PC-9 (cell line): ENCODE measurements at regions of chr4 and their contacts with region 1.

Region 1: GRCh38 chr4:41214136-41214824 is at the start of gene APBB2:
- DNase-seq: peak; percentile 89 to 95
- H3K4me3 ChIP-seq: peak within 1 kb of the TSS; percentile 86
- H3K27ac ChIP-seq: peak within 1 kb of the TSS; percentile 38; the same call in 1 of the 2 replicates
- H3K4me1 ChIP-seq: peaks cover 30% of the 10 kb centered on the region
- H3K27me3 ChIP-seq: no peaks in the 10 kb centered on the region
- CTCF ChIP-seq: peak; percentile 77
- total RNA-seq, gene APBB2: 33.6 and 46.0 TPM in 2 replicates

Region 2: DNA sequence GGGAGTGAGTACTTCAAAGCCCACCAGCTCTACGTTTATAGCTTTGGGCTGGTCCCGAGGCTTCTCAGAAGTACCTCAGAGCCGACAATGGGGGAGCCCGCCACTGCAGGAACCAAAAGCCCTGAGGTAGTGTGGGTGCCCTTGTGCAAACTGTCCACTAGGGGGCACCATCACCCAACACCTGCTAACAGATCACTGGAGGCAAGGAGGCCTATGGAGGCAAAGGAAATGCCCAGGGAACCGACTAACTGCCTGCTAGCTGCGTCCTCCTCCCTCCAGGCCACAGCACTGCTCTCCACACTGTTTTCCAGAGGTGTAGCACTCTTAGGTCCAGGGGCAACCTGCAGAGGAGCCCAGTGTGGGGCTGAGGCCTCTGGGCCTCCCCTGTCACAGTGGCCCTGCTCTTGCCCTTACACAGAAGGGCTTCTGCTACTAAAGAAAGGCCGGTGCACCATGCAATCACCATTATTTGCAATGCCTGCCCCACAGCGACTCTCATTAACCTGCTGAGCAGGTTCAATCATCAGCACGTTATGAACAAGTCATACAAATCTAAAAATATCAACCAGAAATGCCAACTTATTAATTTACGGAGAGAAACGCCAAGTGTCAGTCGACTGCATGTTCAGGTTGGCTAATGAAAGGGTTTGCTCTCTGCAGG is 305.4 kb before region 1 on chr4:
- CTCF ChIA-PET with region 1: interaction called, 3 read pairs
- POLR2A ChIA-PET with region 1: no interaction called
- intact Hi-C with region 1: loop called (anchors 1 kb)
- DNase-seq: peak; percentile 41 to 80
- H3K4me3 ChIP-seq: no peak overlapping the region
- H3K27ac ChIP-seq: no peak overlapping the region
- H3K4me1 ChIP-seq: peaks cover 10% of the 10 kb centered on the region; the same call in 1 of the 2 replicates
- H3K27me3 ChIP-seq: no peaks in the 10 kb centered on the region
- CTCF ChIP-seq: peak; percentile 92

Region 3: GRCh38 chr4:40976343-40976742 is 237.9 kb before region 1 on chr4:
- CTCF ChIA-PET with region 1: interaction called, 6 read pairs
- POLR2A ChIA-PET with region 1: no interaction called
- intact Hi-C with region 1: loop called (anchors 1 kb)
- DNase-seq: peak; percentile 38 to 63
- H3K4me3 ChIP-seq: no peak overlapping the region
- H3K27ac ChIP-seq: no peak overlapping the region
- H3K4me1 ChIP-seq: peaks cover 4% of the 10 kb centered on the region; the same call in 1 of the 2 replicates
- H3K27me3 ChIP-seq: no peaks in the 10 kb centered on the region
- CTCF ChIP-seq: peak; percentile 86

Region 4: DNA sequence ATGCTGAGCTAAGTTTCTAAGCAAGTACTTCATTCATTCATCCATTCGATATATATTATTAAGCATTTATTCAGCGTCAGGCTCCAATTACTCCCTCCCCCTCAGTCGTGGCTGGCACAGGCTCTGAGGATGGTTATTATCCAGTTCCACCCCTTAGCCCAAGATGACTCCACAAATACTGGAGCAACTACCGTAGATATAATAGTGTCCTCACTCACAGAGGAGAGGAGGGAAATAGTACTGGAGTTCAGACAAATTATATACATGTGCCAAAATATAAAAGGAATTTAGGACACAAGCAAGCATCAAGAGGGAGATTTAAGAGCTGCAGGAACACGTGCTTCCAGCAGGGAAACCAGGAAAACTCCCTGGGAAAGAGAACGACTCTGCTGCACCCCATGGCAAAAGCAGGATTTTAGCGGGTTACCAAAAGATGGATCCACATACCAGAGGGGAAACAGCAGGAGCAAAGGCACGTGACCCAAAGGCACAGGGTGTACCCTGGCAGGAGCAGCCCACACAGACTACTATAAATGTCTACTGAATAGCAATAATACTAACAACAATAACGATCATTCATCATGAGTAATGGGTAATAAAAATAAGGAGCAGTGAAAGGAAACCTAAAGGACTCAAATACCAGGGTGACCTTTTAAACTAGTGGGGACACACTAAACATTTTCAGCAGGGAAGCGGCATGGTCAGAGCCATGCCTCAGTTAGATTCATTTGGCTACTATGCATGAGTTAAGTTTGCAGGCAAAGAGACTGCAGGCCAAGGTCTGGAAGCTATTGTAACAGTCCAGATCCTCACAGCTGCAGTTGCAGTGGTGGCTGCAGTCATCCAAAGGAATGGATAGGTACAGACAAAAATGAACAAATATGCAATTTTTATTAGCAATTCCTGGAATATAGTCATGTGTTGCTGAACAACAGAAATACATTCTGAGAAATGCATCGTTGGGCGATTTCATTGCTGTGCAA is 153.6 kb before region 1 on chr4:
- CTCF ChIA-PET with region 1: no interaction called
- POLR2A ChIA-PET with region 1: no interaction called
- intact Hi-C with region 1: loop called (anchors 5 kb)
- DNase-seq: no peak
- H3K4me3 ChIP-seq: no peak overlapping the region
- H3K27ac ChIP-seq: no peak overlapping the region
- H3K4me1 ChIP-seq: 0 out of 2 replicates have a peak, but pooled peaks cover 4% of the 10 kb centered on the region
- H3K27me3 ChIP-seq: no peaks in the 10 kb centered on the region
- CTCF ChIP-seq: no peak

Region 5: DNA sequence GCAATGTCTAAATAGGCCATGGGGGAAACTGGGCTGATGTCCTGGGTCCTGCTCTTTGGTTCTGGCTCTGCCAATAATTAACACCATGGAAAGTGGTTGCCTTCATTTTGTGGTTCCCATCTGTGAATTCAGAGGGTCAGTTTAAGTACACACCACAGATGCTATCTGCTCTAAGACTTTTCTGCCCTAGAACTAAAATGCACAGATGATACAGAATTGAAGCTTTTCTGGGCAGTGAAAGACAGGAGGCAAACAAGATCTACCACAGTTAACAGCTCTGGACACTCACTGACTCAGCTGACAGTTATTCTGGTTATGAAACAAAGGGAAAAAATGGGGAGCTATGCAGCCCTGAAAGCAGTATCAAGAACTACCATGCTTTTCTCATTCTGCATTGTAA is 37.3 kb before region 1 on chr4:
- CTCF ChIA-PET with region 1: interaction called, 6 read pairs
- POLR2A ChIA-PET with region 1: no interaction called
- intact Hi-C with region 1: loop called (anchors 1 kb)
- DNase-seq: peak; percentile 25 to 57
- H3K4me3 ChIP-seq: no peak overlapping the region
- H3K27ac ChIP-seq: no peak overlapping the region
- H3K4me1 ChIP-seq: peaks cover 24% of the 10 kb centered on the region; the same call in 1 of the 2 replicates
- H3K27me3 ChIP-seq: no peaks in the 10 kb centered on the region
- CTCF ChIP-seq: 0 out of 2 replicates have a peak, but pooled peaks have one; percentile 21

Region 6: DNA sequence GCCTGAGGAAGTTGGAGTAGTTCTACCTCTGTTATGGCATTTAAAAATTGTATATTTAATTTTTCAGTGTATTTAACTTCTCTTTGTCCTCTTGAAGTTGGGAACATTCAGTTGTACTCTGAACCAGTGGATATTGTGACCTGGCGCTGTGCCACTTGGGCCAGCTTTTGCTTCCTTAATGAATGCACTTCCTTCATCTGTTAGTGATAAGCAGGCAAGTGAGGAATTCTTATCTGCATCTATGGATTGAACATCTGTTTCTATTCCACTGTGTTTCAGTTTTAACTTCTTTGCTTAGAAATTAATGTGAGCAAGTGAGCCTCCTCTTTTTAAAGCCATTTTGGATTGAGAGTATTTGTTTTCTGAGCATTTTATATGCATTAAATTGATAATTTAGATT is 170.7 kb after region 1 on chr4:
- CTCF ChIA-PET with region 1: no interaction called
- POLR2A ChIA-PET with region 1: no interaction called
- intact Hi-C with region 1: no loop called
- DNase-seq: no peak
- H3K4me3 ChIP-seq: no peak overlapping the region
- H3K27ac ChIP-seq: no peak overlapping the region
- H3K4me1 ChIP-seq: no peaks in the 10 kb centered on the region
- H3K27me3 ChIP-seq: no peaks in the 10 kb centered on the region
- CTCF ChIP-seq: no peak